Activated naive CD4-positive, alpha-beta T cell treated with anti-CD3 and anti-CD28 coated beads for 36 hours (primary cell): ENCODE measurements at regions of chr7 and their contacts with region 1.

Region 1: DNA sequence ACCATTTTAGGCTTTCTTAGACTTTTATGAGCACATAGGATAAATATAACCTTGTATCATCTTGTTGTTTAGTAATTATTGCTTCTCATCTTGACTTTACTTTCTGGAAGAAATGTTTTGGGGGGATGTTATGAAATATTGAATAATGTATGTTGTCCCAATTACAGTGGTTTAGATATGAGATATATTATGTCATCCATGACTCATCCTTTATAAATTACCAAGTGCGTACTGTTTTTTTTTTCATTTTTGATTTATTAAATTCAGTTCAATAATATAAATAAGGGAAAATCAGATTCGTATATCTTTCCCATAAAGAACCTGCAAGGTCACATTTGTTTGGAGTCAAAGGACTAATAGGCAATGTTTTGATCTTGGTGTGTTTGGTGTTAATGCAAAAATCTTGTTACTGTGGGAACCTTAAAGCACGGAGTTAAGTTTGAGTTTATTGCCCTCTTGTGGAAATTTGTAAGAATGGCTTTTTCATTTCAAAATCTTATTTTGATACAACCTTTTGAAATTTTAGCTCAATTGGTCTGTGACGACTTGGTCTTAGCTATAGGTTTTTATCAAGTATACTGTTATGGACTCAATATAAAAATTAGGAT is 108.6 kb downstream of the SRI start:
- DNase-seq: no peak
- H3K4me3 Mint-ChIP-seq: no peak overlapping the region
- H3K27ac Mint-ChIP-seq: no peak overlapping the region
- H3K4me1 Mint-ChIP-seq: peaks cover 4% of the 10 kb centered on the region
- H3K27me3 Mint-ChIP-seq: no peaks in the 10 kb centered on the region

Region 2: GRCh38 chr7:87312215-87312865 is 798.9 kb before region 1 on chr7:
- CTCF ChIA-PET with region 1: no interaction called
- intact Hi-C with region 1: loop called (anchors 5 kb)
- DNase-seq: peak; percentile 58
- H3K4me3 Mint-ChIP-seq: no peak overlapping the region
- H3K27ac Mint-ChIP-seq: no peak overlapping the region
- H3K4me1 Mint-ChIP-seq: no peaks in the 10 kb centered on the region
- H3K27me3 Mint-ChIP-seq: no peaks in the 10 kb centered on the region

Region 3: DNA sequence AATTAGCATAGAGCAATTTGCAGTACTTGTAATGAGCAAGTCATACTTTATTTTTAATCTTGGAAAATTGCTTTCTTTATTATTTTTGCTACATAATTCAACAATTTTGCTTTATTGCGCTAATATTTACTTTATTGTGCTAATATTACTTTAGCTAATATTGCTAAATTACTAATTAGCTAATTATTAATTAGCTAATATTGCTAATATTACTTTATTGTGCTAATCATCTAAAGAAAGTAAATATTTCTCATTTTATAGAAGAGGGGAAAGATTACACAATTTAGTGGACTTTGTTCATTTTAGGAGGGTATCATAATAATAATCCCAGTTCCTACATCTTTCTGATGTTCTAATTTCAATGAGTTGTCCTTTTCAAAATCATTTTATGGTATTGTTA is 421.9 kb before region 1 on chr7:
- CTCF ChIA-PET with region 1: no interaction called
- intact Hi-C with region 1: no loop called
- DNase-seq: no peak
- H3K4me3 Mint-ChIP-seq: no peak overlapping the region
- H3K27ac Mint-ChIP-seq: no peak overlapping the region
- H3K4me1 Mint-ChIP-seq: no peaks in the 10 kb centered on the region
- H3K27me3 Mint-ChIP-seq: no peaks in the 10 kb centered on the region

Region 4: DNA sequence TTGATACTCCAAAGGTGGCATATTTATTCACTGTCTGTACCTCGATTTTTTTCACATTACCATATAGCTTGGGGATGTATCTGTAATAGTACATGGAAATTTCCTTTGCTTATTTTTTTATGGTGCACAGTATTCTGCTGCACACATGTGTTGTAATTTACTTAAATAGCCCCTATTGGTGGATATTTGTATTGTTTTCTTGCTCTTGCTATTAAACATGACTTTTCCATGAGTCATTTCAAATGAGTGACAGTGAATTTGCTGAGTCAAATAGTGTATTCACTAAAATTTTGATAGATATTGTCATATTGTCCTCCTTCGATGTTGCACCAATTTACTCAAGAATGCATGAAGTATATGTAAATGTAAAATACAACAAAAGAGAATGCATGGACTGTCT is 318.1 kb after region 1 on chr7:
- CTCF ChIA-PET with region 1: no interaction called
- intact Hi-C with region 1: no loop called
- DNase-seq: no peak
- H3K4me3 Mint-ChIP-seq: no peak overlapping the region
- H3K27ac Mint-ChIP-seq: no peak overlapping the region
- H3K4me1 Mint-ChIP-seq: no peaks in the 10 kb centered on the region
- H3K27me3 Mint-ChIP-seq: peaks cover 4% of the 10 kb centered on the region